Activated CD4-positive, alpha-beta memory T cell treated with anti-CD3 and anti-CD28 coated beads for 36 hours (primary cell): ENCODE measurements at regions of chr6 and their contacts with region 1.

Region 1: GRCh38 chr6:10383781-10384616 is 30.9 kb downstream of the TFAP2A start:
- DNase-seq: no peak
- H3K4me3 Mint-ChIP-seq: no peak overlapping the region
- H3K27ac Mint-ChIP-seq: no peak overlapping the region
- H3K4me1 Mint-ChIP-seq: peaks cover 8% of the 10 kb centered on the region
- H3K27me3 Mint-ChIP-seq: peaks cover 68% of the 10 kb centered on the region

Region 2: GRCh38 chr6:10411971-10412745 is 28.2 kb after region 1 on chr6:
- CTCF ChIA-PET with region 1: interaction called, 5 read pairs
- POLR2A ChIA-PET with region 1: no interaction called
- intact Hi-C with region 1: loop called (anchors 2 kb)
- DNase-seq: peak; percentile 54
- H3K4me3 Mint-ChIP-seq: peak overlapping the region; percentile 80
- H3K27ac Mint-ChIP-seq: peak overlapping the region; percentile 52
- H3K4me1 Mint-ChIP-seq: peaks cover 33% of the 10 kb centered on the region
- H3K27me3 Mint-ChIP-seq: peaks cover 77% of the 10 kb centered on the region

Region 3: GRCh38 chr6:10478187-10479040 is 94.4 kb after region 1 on chr6:
- CTCF ChIA-PET with region 1: no interaction called
- POLR2A ChIA-PET with region 1: no interaction called
- intact Hi-C with region 1: no loop called
- DNase-seq: no peak
- H3K4me3 Mint-ChIP-seq: no peak overlapping the region
- H3K27ac Mint-ChIP-seq: no peak overlapping the region
- H3K4me1 Mint-ChIP-seq: no peaks in the 10 kb centered on the region
- H3K27me3 Mint-ChIP-seq: peaks cover 9% of the 10 kb centered on the region